ENCODE measurements at regions of chr16 and their contacts with region 1.

Region 1: GRCh38 chr16:56700195-56700594 is 17.9 kb downstream of the MT1X start:
- DNase-seq: no peak

Region 2: DNA sequence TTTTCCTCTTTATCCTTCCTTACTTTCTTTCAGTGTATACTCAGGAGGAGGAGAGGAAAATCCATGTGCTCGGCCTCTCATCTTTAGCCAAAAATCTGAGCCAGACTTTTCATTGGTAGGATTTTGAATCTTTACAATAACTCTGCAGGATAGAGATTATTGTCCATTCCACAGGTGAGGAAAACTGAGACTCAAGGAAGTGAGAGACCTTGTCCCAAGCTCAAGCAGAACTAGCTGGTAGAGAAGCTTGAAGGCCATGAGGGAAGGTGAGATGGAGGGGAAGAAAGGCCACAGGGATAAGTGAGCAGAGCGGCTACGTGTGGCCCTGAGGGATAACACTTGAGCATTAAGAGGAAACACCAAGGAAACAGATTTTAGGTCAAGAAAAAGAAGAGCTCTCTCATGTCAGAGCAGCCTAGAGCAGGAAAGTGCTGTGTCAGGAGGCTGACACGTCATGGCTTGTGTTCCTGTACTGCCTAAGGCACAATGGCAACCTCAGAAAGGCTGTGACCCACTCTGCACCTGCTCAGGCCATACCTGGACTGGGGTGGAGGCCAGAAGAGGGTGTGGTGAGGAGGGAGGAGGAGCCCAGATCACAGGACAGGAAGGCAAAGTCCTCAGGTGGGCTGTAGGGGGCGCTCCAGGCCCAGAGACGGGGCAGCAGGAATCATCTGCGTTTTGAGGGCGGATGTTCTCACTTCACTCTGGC is 123.5 kb before region 1 on chr16:
- CTCF ChIA-PET with region 1: interaction called, 14 read pairs
- POLR2A ChIA-PET with region 1: no interaction called
- DNase-seq: peak; percentile 76

Region 3: DNA sequence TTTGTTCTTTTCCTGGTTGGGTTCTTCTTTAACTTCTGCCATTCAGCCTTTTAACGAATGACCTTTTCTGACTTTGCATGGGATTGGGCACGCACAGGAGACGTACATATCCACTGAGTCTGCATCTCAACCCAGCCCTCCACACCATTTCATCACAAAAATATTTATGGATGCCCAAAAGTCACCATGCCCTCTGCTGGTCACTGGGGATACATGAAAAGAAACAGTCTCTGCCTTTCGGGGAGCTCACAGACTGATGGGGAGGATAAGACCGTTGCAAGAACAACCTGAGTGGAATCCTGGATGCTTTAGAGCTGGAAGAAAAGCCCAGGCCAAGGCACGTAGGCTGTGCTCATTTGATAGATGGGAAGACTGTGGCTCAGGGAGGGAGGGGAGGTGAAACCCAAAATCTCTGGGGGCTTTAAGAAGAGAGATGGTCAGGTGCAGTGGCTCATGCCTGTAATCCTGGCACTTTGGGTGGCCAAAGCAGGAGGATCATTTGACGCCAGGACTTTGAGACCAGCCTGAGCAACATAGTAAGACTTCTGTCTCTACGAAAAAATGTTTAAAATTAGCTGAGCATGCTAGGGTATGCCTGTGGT is 99.7 kb before region 1 on chr16:
- CTCF ChIA-PET with region 1: interaction called, 15 read pairs
- POLR2A ChIA-PET with region 1: interaction called, 5 read pairs
- DNase-seq: peak; percentile 52

Region 4: GRCh38 chr16:56673921-56674320 is 26.3 kb before region 1 on chr16:
- CTCF ChIA-PET with region 1: interaction called, 10 read pairs
- POLR2A ChIA-PET with region 1: no interaction called
- DNase-seq: no peak

Measured in HEK293T (cell line).